CD4-positive, alpha-beta T cell (primary cell): ENCODE measurements at regions of chr10 and their contacts with region 1.

Region 1: DNA sequence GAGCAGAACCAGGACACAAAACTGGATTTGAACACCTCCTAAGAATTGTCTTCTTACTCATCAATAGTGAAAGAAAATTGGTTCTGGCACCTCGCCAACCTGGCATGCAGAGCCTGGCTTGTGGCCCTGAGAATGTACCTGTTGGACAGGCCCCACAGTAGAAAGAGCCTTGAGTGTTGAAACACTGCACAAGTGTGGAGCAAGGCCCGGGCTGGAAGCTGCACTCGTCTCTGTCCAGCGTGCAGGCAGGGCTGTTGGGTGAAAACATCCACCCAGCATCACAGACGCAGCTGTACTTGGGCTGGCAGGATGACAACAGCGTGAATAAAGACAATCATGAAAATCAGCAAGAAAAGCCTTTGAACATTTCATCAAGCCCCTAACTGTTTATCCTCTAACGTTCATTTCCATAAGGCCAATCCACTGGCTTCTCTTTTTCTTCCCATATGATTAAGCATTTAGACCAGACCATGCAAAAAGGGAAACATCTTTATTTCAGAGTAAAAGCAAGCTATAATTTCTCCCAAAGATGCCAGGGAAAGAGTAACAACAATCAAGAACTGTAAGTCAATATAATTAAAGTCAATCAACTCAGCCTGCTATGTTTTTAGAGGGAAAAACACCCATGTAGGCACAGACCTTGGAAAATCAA is 15.6 kb downstream of the CUBN start:
- DNase-seq: peak in 1 of 14 experiments; percentile 10
- ATAC-seq: no peak
- H3K4me3 ChIP-seq: no peak overlapping the region
- H3K4me3 Mint-ChIP-seq: no peak overlapping the region
- H3K27ac ChIP-seq: no peak overlapping the region
- H3K27ac Mint-ChIP-seq: no peak overlapping the region
- H3K4me1 ChIP-seq: peaks cover 5% of the 10 kb centered on the region
- H3K4me1 Mint-ChIP-seq: peaks cover 16% of the 10 kb centered on the region
- H3K27me3 ChIP-seq: no peaks in the 10 kb centered on the region
- H3K27me3 Mint-ChIP-seq: no peaks in the 10 kb centered on the region
- CTCF ChIP-seq: no peak

Region 2: GRCh38 chr10:16155834-16156233 is 958.2 kb before region 1 on chr10:
- CTCF ChIA-PET with region 1: no interaction called
- POLR2A ChIA-PET with region 1: no interaction called
- intact Hi-C with region 1: no loop called
- DNase-seq: no peak
- ATAC-seq: no peak
- H3K4me3 ChIP-seq: no peak overlapping the region
- H3K4me3 Mint-ChIP-seq: no peak overlapping the region
- H3K27ac ChIP-seq: no peak overlapping the region
- H3K27ac Mint-ChIP-seq: no peak overlapping the region
- H3K4me1 ChIP-seq: no peaks in the 10 kb centered on the region
- H3K4me1 Mint-ChIP-seq: no peaks in the 10 kb centered on the region
- H3K27me3 ChIP-seq: no peaks in the 10 kb centered on the region
- H3K27me3 Mint-ChIP-seq: no peaks in the 10 kb centered on the region
- CTCF ChIP-seq: no peak

Region 3: GRCh38 chr10:16938952-16939351 is 175.1 kb before region 1 on chr10:
- CTCF ChIA-PET with region 1: no interaction called
- POLR2A ChIA-PET with region 1: no interaction called
- intact Hi-C with region 1: loop called in 1 of 2 experiments (anchors 5 kb)
- DNase-seq: no peak
- ATAC-seq: no peak
- H3K4me3 ChIP-seq: no peak overlapping the region
- H3K4me3 Mint-ChIP-seq: no peak overlapping the region
- H3K27ac ChIP-seq: no peak overlapping the region
- H3K27ac Mint-ChIP-seq: no peak overlapping the region
- H3K4me1 ChIP-seq: no peaks in the 10 kb centered on the region
- H3K4me1 Mint-ChIP-seq: peaks cover under 1% of the 10 kb centered on the region
- H3K27me3 ChIP-seq: no peaks in the 10 kb centered on the region
- H3K27me3 Mint-ChIP-seq: no peaks in the 10 kb centered on the region
- CTCF ChIP-seq: no peak